Lower leg skin (tissue), 4 donors: ENCODE measurements at regions of chr22 and their contacts with region 1.

Region 1: GRCh38 chr22:42906605-42907348 is 49.7 kb upstream of the ARFGAP3 start:
- DNase-seq: no peak
- H3K4me3 ChIP-seq: no peak overlapping the region
- CTCF ChIP-seq: no peak
- POLR2A ChIP-seq: no peak

Region 2: DNA sequence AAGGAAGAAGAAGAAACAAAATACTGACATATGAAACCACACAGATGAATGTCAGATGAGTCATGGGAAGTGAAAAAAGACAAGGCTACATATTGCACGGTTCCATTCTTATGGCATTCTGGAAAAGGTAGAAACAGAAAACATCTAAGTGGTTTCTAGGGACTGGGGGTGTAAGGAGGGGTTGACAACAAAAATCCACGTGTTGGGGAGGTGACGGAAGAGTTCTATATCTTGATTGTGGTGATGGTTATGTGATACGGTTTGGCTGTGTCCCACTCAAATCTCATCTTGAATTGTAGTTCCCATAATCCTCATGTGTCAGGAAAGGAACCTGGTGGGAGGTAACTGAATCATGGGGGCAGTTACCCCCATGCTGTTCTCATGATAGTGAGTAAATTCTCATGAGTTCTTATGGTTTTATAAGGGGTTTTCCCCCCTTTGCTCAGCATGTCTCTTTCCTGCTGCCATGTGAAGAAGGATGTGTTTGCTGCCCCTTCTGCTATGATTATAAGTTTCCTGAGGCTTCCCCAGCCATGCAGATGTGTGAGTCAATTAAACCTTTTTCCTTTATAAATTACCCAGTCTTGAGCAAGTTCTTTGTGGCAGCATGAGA is 43.3 kb before region 1 on chr22:
- intact Hi-C with region 1: loop called (anchors 5 kb)
- DNase-seq: no peak
- H3K4me3 ChIP-seq: no peak overlapping the region
- CTCF ChIP-seq: no peak
- POLR2A ChIP-seq: no peak

Region 3: DNA sequence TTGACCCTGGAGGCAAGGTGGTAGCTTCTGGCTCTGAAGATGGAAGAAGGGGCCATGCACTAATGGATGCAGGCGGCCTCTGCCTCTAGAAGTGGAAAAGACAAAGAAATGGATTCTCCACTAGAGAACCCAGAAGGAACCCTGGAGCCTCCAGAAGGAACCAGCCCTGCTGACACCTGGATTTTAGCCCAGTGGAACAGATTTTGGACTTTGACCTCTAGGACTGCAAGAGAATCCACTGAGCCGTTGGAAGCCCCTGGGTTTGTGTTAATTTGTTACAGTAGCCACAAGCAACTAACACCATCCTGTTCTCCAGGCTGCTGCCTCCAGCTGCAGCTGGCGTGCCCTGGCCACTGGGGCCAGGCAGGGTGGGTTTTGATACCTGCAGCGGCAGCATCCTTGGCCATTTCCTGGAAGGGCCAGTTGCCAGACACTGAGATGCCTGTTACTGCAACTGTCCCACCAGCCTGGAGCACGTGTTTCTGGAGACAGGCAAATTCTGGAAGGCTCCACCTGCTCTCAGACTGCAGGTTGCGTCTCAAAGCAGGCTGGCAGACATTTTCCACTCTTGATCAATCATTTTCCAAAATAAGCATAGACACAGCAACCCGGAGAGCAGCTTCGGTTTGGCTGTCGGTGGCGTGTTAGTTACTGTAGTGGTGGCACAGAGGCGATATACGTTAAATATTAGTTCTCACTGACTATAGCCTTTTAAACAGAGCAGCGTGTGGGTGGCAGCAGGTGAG is 1197.1 kb after region 1 on chr22:
- intact Hi-C with region 1: loop called (anchors 5 kb)
- DNase-seq: peak in 1 of 2 donors; percentile 69
- H3K4me3 ChIP-seq: no peak overlapping the region
- CTCF ChIP-seq: no peak
- POLR2A ChIP-seq: no peak